CD4-positive, alpha-beta memory T cell (primary cell): ENCODE measurements at regions of chr11 and their contacts with region 1.

Region 1: DNA sequence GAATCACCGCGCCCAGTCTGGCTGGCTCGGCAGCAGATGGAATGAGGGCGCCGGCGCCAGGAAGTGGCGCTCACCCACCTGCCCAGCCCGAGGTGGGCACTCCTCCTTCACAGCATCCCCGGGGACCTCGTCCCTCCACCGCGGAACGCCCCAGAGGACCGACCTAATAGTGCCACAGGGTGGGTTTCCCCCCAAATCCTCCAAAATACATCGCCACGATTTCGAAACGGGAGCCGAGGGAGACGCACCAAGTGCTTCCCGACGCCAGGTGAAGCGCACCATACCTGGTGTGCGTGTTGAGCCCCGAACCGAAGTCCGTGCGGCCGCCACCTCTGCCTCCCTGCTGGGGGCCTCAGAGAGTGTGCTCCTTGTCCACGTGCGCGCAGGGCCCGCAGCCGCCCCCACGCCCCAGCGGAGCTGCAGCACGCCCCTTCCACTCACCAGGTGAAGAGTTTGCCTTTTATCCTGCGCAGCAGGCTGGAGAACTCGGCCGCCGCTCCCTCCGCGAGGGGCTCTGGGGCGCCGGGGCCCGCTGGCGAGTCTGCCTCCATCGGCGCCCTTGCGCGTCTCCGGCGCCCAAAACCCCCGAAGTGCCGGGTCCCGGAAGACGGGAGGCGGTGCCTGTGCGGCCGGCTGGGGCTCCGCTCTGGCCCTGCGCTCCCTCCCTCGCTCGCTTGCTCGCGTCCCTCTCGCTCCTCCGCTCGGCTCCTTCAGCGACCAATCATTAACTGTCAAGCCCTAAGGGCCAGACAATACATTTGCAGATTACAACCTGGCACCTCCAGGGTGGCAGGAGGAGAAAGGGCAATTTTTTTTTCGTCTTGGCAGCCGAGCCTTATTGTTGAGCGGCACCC is at the start of gene SLC35F2:
- DNase-seq: peak; percentile 56 to 64 (median 61)
- H3K4me3 ChIP-seq: peak within 1 kb of the TSS; percentile 91 to 94
- H3K4me3 Mint-ChIP-seq: peak within 1 kb of the TSS; percentile 94 to 100 (median 97)
- H3K27ac ChIP-seq: peak within 1 kb of the TSS; percentile 45
- H3K27ac Mint-ChIP-seq: peak within 1 kb of the TSS; percentile 85 to 94 (median 91)
- H3K4me1 ChIP-seq: peaks cover 18% of the 10 kb centered on the region
- H3K4me1 Mint-ChIP-seq: peaks cover 18 to 51% (median 23%) of the 10 kb centered on the region in 4 donors
- H3K27me3 ChIP-seq: no peaks in the 10 kb centered on the region
- H3K27me3 Mint-ChIP-seq: no peaks in the 10 kb centered on the region
- total RNA-seq, gene SLC35F2: 6.5 to 7.9 TPM

Region 2: GRCh38 chr11:107457558-107458271 is 400.7 kb before region 1 on chr11 and contains the start of gene CWF19L2:
- CTCF ChIA-PET with region 1: no interaction called
- POLR2A ChIA-PET with region 1: no interaction called
- intact Hi-C with region 1: loop called (anchors 1 kb)
- DNase-seq: peak; percentile 90 to 94 (median 93)
- H3K4me3 ChIP-seq: peak within 1 kb of the TSS; percentile 78 to 90
- H3K4me3 Mint-ChIP-seq: peak within 1 kb of the TSS; percentile 91 to 97 (median 94)
- H3K27ac ChIP-seq: peak within 1 kb of the TSS; percentile 81
- H3K27ac Mint-ChIP-seq: peak within 1 kb of the TSS; percentile 80 to 97 (median 95)
- H3K4me1 ChIP-seq: peaks cover 16% of the 10 kb centered on the region
- H3K4me1 Mint-ChIP-seq: peaks cover 22 to 31% (median 25%) of the 10 kb centered on the region in 4 donors
- H3K27me3 ChIP-seq: no peaks in the 10 kb centered on the region
- H3K27me3 Mint-ChIP-seq: no peaks in the 10 kb centered on the region
- total RNA-seq, gene CWF19L2: 34.8 to 38.8 TPM

Region 3: DNA sequence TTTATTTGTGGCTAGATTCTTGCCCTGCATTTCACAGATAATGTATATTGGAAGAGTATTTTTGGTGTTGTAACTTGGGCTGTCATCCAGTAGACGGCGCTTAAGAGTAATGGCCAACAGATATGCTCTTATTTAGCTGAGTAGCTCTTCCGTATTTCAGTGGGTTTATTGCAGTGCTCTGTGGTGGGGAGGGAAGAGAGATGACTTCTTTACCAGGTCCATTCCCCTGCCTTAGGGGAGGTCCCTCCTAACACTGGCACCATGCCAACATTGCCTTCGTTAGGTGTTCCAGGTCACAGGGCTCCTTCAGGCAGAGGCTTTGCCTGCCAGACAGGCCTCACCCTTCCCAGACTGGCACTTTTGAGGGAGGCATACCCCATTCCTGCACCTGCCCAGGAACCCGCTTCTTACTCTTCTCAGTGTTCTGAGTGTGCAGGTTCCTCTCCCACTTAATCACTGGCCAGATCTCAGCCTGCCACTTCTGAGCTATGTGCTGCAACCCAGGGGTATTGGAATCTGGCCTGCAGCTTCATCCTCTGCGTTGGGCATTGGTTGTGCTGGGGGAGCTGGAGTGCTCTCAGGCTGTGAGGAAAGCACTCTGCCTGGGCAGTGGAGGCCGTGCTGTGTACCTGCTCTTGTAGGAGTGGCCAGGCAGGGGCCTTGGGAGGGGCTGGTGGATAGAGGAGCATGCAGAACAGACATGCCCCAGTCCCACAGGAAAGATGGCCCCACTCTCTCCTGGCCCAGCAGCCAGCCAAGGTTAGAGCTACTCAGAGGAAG is 117.2 kb before region 1 on chr11:
- CTCF ChIA-PET with region 1: no interaction called
- POLR2A ChIA-PET with region 1: no interaction called
- intact Hi-C with region 1: no loop called
- DNase-seq: no peak
- H3K4me3 ChIP-seq: no peak overlapping the region
- H3K4me3 Mint-ChIP-seq: no peak overlapping the region
- H3K27ac ChIP-seq: no peak overlapping the region
- H3K27ac Mint-ChIP-seq: peak overlapping the region in 1 of 7 donors; percentile 23
- H3K4me1 ChIP-seq: no peaks in the 10 kb centered on the region
- H3K4me1 Mint-ChIP-seq: no peaks in the 10 kb centered on the region
- H3K27me3 ChIP-seq: no peaks in the 10 kb centered on the region
- H3K27me3 Mint-ChIP-seq: peaks cover 13 to 36% of the 10 kb centered on the region in 2 donors

Region 4: DNA sequence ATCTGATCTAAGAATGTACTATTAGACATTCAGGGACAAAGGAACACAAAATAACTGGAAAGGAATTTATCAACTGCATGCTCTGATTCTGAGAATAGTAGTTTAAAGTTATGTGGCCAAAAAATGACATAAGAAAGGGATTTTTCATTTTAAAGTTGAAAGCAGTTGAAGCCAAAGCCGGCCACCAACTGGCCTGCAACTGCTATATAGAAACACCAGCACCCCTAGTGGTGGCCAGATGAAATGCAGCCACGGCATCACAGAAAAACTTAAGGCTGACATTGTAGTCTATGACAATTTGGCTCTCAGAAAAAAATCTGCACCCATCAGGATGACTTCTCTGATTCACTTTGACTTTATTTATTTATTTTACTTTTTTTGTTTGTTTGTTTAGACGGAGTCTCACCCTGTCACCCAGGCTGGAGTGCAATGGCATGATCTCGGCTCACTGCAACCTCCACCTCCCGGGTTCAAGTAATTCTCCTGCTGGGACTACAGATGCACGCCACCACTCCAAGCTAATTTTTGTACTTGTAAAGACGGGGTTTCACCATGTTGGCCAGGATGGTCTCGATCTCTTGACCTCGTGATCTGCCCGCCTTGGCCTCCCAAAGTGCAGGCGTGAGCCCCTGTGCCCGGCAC is 59.1 kb before region 1 on chr11:
- CTCF ChIA-PET with region 1: no interaction called
- POLR2A ChIA-PET with region 1: no interaction called
- intact Hi-C with region 1: loop called (anchors 2 kb)
- DNase-seq: peak; percentile 31 to 52 (median 43)
- H3K4me3 ChIP-seq: no peak overlapping the region
- H3K4me3 Mint-ChIP-seq: no peak overlapping the region
- H3K27ac ChIP-seq: no peak overlapping the region
- H3K27ac Mint-ChIP-seq: no peak overlapping the region
- H3K4me1 ChIP-seq: no peaks in the 10 kb centered on the region
- H3K4me1 Mint-ChIP-seq: peaks cover 0 to 2% (median 0%) of the 10 kb centered on the region in 4 donors
- H3K27me3 ChIP-seq: no peaks in the 10 kb centered on the region
- H3K27me3 Mint-ChIP-seq: no peaks in the 10 kb centered on the region

Region 5: GRCh38 chr11:107840129-107840484 is 18.3 kb before region 1 on chr11:
- CTCF ChIA-PET with region 1: no interaction called
- POLR2A ChIA-PET with region 1: interaction called, 3 read pairs
- intact Hi-C with region 1: loop called (anchors 1 kb)
- DNase-seq: no peak
- H3K4me3 ChIP-seq: peak overlapping the region in 1 of 2 donors; percentile 17
- H3K4me3 Mint-ChIP-seq: peak overlapping the region in 6 of 8 donors; percentile 54 to 92 (median 83)
- H3K27ac ChIP-seq: peak overlapping the region; percentile 32
- H3K27ac Mint-ChIP-seq: peak overlapping the region in 6 of 7 donors; percentile 43 to 93 (median 76)
- H3K4me1 ChIP-seq: peaks cover 16% of the 10 kb centered on the region
- H3K4me1 Mint-ChIP-seq: peaks cover 16 to 28% (median 21%) of the 10 kb centered on the region in 4 donors
- H3K27me3 ChIP-seq: no peaks in the 10 kb centered on the region
- H3K27me3 Mint-ChIP-seq: no peaks in the 10 kb centered on the region

Region 6: GRCh38 chr11:108593214-108593922 is 734.9 kb after region 1 on chr11 and contains the start of gene EXPH5:
- CTCF ChIA-PET with region 1: no interaction called
- POLR2A ChIA-PET with region 1: no interaction called
- intact Hi-C with region 1: loop called (anchors 5 kb)
- DNase-seq: peak; percentile 82 to 89 (median 86)
- H3K4me3 ChIP-seq: peak within 1 kb of the TSS; percentile 83 to 89
- H3K4me3 Mint-ChIP-seq: peak within 1 kb of the TSS; percentile 95 to 100 (median 97)
- H3K27ac ChIP-seq: peak within 1 kb of the TSS; percentile 45
- H3K27ac Mint-ChIP-seq: peak within 1 kb of the TSS; percentile 78 to 99 (median 95)
- H3K4me1 ChIP-seq: peaks cover 9% of the 10 kb centered on the region
- H3K4me1 Mint-ChIP-seq: peaks cover 17 to 23% (median 18%) of the 10 kb centered on the region in 4 donors
- H3K27me3 ChIP-seq: peaks cover 6% of the 10 kb centered on the region
- H3K27me3 Mint-ChIP-seq: peaks cover 2 to 3% of the 10 kb centered on the region in 2 donors
- total RNA-seq, gene EXPH5: 2.6 to 4.0 TPM